MCF 10A (cell line): ENCODE measurements at regions of chr6 and their contacts with region 1.

Region 1: GRCh38 chr6:25278914-25279747 is at the start of gene CARMIL1:
- DNase-seq: peak; percentile 92
- H3K4me3 Mint-ChIP-seq: peak within 1 kb of the TSS; percentile 96
- H3K27ac Mint-ChIP-seq: peak within 1 kb of the TSS; percentile 93
- H3K4me1 Mint-ChIP-seq: peaks cover 31% of the 10 kb centered on the region
- H3K27me3 Mint-ChIP-seq: no peaks in the 10 kb centered on the region
- CTCF ChIP-seq: peak; percentile 83
- total RNA-seq, gene CARMIL1: 23.0 and 25.2 TPM in 2 replicates

Region 2: DNA sequence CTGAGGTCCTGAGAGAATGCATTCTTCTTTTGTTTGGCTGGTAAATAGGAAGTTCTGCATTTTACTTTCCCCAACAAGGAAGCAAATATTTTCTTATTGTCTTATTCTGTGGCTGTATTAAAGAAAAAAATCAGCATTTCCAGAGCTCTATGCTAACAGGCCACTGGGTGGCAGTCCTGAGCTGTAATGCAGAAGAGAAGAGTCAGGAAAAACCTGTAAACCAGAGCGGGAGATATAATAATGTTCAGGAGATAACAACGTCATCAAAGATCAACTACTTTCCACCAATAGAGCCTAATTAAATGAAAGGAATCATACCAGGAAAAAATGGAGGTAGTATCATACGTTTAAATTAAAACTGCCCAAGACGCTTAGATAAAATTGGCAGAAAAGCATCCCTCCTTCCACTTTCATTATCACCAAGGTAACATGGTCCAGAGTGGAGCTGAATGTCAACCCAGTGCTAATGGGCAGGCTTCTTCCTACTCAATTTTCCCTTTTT is 55.6 kb before region 1 on chr6:
- CTCF ChIA-PET with region 1: interaction called, 11 read pairs
- POLR2A ChIA-PET with region 1: interaction called, 10 read pairs
- intact Hi-C with region 1: no loop called
- DNase-seq: peak; percentile 81
- H3K4me3 Mint-ChIP-seq: peak overlapping the region; percentile 13
- H3K27ac Mint-ChIP-seq: no peak overlapping the region
- H3K4me1 Mint-ChIP-seq: peaks cover 32% of the 10 kb centered on the region
- H3K27me3 Mint-ChIP-seq: no peaks in the 10 kb centered on the region
- CTCF ChIP-seq: peak; percentile 87

Region 3: GRCh38 chr6:25297039-25297441 is 17.9 kb after region 1 on chr6:
- CTCF ChIA-PET with region 1: interaction called, 4 read pairs
- POLR2A ChIA-PET with region 1: interaction called, 32 read pairs
- intact Hi-C with region 1: no loop called
- DNase-seq: no peak
- H3K4me3 Mint-ChIP-seq: no peak overlapping the region
- H3K27ac Mint-ChIP-seq: peak overlapping the region; percentile 6
- H3K4me1 Mint-ChIP-seq: peaks cover 7% of the 10 kb centered on the region
- H3K27me3 Mint-ChIP-seq: no peaks in the 10 kb centered on the region
- CTCF ChIP-seq: no peak

Region 4: DNA sequence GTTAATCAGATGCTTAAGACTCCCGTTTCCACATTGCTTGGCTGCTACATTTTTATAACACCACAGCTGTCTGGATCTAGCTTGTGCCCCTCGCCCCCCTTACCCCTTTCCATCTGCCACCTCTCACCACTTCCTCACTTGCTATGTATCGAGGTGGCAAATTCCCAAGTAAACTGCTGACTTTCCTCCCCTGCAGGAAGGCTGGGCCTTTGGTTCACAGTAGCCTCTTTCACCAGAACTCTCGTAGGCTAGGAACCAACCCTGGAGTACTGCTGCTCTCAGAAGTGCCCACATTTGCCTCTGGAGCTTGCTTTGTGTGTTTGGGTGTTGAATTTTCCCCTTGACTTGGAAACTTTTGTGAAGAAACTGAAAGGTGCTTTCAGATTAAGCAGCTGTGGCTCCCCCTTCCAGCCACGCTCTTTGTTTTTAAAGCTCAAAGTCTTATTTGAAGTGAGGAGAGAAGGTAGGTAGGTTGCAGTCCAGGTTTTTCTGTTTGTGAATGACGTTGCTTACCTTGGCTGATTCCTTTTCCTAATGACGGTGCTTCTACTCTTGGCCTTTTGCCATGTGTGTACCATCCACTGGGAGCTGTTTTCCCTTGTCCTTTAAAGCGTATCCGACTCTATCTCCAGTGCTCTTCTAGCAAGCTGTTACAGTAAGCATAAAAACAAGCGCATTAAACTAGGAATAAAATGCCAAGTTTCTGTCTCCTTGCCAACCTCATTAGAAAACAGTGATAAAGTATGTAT is 90.5 kb after region 1 on chr6:
- CTCF ChIA-PET with region 1: interaction called, 9 read pairs
- POLR2A ChIA-PET with region 1: interaction called, 26 read pairs
- intact Hi-C with region 1: loop called (anchors 5 kb)
- DNase-seq: peak; percentile 16
- H3K4me3 Mint-ChIP-seq: no peak overlapping the region
- H3K27ac Mint-ChIP-seq: peak overlapping the region; percentile 62
- H3K4me1 Mint-ChIP-seq: peaks cover 24% of the 10 kb centered on the region
- H3K27me3 Mint-ChIP-seq: no peaks in the 10 kb centered on the region
- CTCF ChIP-seq: no peak

Region 5: GRCh38 chr6:25490018-25490801 is 211.1 kb after region 1 on chr6:
- CTCF ChIA-PET with region 1: interaction called, 63 read pairs
- POLR2A ChIA-PET with region 1: interaction called, 33 read pairs
- intact Hi-C with region 1: loop called (anchors 1 kb)
- DNase-seq: peak; percentile 88
- H3K4me3 Mint-ChIP-seq: no peak overlapping the region
- H3K27ac Mint-ChIP-seq: peak overlapping the region; percentile 86
- H3K4me1 Mint-ChIP-seq: peaks cover 8% of the 10 kb centered on the region
- H3K27me3 Mint-ChIP-seq: no peaks in the 10 kb centered on the region
- CTCF ChIP-seq: peak; percentile 70

Region 6: DNA sequence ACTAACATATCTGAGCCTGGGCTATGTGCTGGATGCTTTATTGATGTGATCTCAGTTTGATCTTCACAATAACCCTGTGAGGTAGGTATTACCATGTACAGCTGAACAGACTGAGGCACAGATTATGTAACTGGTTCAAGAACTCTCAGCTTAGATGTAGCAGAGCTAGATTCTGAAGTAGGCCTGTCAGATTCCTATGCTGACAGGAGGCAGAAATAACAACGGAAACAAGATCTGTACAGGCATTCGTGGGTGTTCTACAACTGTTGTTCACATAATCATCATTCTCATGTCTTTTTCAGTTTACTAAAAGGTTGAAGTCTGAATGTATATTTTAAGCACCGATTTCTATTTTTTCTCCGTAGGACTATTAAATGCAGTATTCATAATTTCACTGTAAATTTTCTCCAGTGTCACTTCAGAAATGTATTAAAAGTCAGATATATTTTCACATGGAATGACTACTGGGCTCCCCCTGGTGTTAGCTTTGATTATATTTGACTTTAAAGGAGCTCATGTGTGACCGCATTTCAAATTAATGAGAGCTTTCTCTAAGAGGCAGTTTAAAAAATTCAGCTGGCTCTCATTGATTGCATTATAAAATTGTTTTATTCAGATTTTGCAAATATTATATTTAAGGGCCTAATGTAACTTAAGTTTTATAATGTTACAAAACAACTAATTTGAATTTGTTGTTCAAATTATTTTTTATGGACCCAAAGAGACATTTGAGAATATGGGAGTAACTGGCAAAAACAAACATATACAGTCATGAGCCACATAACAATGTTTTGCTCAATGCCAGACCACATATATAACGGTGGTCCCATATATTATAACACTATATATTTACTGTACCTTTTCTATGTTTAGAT is 439.0 kb after region 1 on chr6:
- CTCF ChIA-PET with region 1: interaction called, 6 read pairs
- POLR2A ChIA-PET with region 1: interaction called, 4 read pairs
- intact Hi-C with region 1: loop called (anchors 5 kb)
- DNase-seq: peak; percentile 57
- H3K4me3 Mint-ChIP-seq: no peak overlapping the region
- H3K27ac Mint-ChIP-seq: no peak overlapping the region
- H3K4me1 Mint-ChIP-seq: peaks cover 6% of the 10 kb centered on the region
- H3K27me3 Mint-ChIP-seq: no peaks in the 10 kb centered on the region
- CTCF ChIP-seq: peak; percentile 62